Aorta (tissue), 5 donors: ENCODE measurements at regions of chr17 and their contacts with region 1.

Region 1: DNA sequence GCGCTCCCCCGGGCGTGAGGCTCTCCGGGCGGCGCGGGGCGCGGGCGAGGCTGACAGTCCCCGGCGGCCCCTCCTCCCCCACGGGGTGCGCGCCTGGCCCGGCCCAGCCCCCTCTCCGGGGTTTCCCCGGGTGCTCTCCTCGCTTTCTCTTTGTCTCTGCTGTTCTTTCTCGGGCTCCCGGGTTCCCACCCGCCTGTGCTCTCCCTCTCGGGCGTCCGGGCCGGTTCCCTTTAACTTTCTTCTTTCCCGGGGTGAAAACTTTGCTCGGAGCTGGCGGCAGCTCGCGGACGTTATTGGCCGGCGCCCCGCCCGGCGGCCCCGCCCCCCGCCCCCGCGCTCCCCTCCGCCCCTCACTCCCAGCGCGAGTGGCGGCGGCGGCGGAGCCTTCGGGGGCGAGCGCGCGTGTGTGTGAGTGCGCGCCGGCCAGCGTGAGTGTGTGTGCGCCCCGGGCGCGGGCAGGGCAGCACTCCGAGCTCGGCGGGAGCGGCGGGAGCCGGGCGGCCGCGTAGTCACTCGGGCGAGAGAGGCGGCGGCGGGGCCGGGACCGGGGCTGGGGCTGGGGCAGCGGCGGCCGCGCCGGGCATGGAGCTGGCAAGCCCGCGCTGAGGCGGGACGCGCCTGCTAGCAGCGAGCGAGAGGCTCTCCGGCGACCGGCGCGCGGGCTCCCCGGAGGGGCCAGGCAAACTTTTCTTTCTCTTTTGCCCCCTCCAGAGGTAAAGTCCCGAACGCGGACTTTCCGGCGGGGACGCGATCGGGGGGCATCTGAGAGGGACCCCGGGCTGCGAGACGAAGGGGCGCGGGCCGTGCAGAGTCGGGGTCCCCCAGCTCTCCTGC is at the start of gene NTN1:
- DNase-seq: peak; percentile 66 to 89
- ATAC-seq: peak; percentile 85
- H3K4me3 ChIP-seq: peak within 1 kb of the TSS; percentile 62 to 95
- H3K27ac ChIP-seq: peak within 1 kb of the TSS; percentile 19 to 31
- H3K4me1 ChIP-seq: no peaks in the 10 kb centered on the region
- H3K27me3 ChIP-seq: no peaks in the 10 kb centered on the region
- total RNA-seq, gene NTN1: 56.5 to 90.4 TPM

Region 2: DNA sequence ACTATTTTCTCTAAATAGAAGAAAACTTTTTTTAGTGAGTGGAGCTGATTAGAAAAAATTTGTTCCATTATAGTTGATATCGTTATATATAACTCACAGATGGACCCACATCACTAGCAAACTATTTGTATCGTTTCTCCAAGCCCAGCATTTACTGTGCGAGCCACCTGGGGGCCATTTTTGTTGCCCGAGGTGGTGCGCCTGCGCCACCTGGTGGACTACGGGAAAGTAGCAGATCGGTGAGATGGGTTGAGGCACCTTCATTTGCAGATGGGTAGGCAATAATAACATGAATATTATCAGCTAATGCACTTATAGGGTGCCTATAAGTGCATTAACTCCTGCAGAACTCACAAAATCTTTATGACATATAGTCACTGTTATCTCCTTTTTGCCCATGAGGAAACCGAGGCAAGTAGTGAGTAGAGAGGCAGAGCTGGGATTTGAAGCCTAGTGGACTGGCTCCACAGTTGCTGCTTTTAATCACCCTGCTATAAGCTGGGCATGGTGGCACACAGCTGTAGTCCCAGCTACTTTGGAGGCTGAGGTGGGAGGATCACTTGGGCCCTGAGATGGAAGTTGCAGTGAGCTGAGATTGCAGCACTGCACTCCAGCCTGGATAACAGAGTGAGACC is 23.3 kb before region 1 on chr17:
- intact Hi-C with region 1: no loop called
- DNase-seq: peak; percentile 74 to 85
- ATAC-seq: no peak
- H3K4me3 ChIP-seq: no peak overlapping the region
- H3K27ac ChIP-seq: no peak overlapping the region
- H3K4me1 ChIP-seq: no peaks in the 10 kb centered on the region
- H3K27me3 ChIP-seq: no peaks in the 10 kb centered on the region

Region 3: GRCh38 chr17:9079483-9080103 is 58.2 kb after region 1 on chr17:
- intact Hi-C with region 1: loop called in 1 of 2 experiments (anchors 10 kb)
- DNase-seq: peak in 1 of 2 donors; percentile 21
- ATAC-seq: no peak
- H3K4me3 ChIP-seq: no peak overlapping the region
- H3K27ac ChIP-seq: no peak overlapping the region
- H3K4me1 ChIP-seq: peaks cover 0 to 6% of the 10 kb centered on the region in 2 donors
- H3K27me3 ChIP-seq: no peaks in the 10 kb centered on the region

Region 4: GRCh38 chr17:9104370-9105041 is 83.1 kb after region 1 on chr17:
- intact Hi-C with region 1: loop called in 1 of 2 experiments (anchors 5 kb)
- DNase-seq: peak; percentile 84 to 90
- ATAC-seq: peak; percentile 89
- H3K4me3 ChIP-seq: no peak overlapping the region
- H3K27ac ChIP-seq: peak overlapping the region; percentile 52 to 78
- H3K4me1 ChIP-seq: peaks cover 0 to 6% of the 10 kb centered on the region in 2 donors
- H3K27me3 ChIP-seq: no peaks in the 10 kb centered on the region

Region 5: DNA sequence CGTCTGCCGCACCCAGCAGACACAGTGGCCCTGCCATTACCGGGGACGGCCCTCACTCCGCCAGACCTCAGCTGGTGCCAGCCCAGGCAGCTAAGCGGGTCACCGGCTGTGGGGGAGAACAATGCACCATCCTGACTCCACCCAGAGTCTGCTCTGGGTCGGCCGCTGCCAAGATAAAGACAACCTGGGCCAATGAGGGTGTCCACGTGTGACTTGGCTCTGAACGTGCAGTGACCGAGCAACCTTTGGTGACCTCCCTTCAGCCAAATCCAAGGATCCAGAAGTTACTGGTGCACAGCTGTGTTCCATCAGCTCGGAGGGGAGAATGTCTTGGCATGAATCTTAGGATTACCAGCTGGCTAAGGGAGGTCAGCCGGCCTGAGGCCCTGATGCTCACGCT is 155.8 kb after region 1 on chr17:
- intact Hi-C with region 1: no loop called
- DNase-seq: peak in 1 of 2 donors; percentile 57
- ATAC-seq: peak; percentile 59
- H3K4me3 ChIP-seq: no peak overlapping the region
- H3K27ac ChIP-seq: no peak overlapping the region
- H3K4me1 ChIP-seq: no peaks in the 10 kb centered on the region
- H3K27me3 ChIP-seq: no peaks in the 10 kb centered on the region